ENCODE measurements at regions of chr5 and their contacts with region 1.

Region 1: DNA sequence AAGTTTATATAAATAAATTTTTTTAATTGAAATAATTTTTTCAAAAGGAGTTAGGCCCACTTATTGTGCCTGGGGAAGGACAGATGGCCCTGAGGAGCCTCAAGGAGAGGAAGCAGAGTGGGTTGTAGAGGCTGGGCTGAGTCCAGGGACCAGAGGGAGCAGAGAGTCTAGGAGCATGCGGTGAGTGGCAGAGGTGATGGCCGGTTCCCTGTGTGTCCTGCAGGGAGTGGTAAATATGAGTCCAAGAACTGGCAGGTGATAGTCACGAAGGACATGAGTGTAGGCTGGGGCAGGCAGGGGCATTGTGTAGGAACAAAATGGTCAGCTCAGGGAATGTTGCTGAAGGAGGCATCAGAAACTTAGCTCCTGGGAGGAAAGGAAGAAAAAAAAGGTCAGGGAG is 8.3 kb upstream of the BTNL9 start:
- DNase-seq: no peak

Region 2: GRCh38 chr5:180353048-180353979 is 678.4 kb before region 1 on chr5 and contains the start of gene GFPT2:
- intact Hi-C with region 1: no loop called
- DNase-seq: peak; percentile 94
- total RNA-seq, gene GFPT2: 75.4 to 83.3 TPM

Region 3: GRCh38 chr5:180831139-180832048 is 200.3 kb before region 1 on chr5:
- intact Hi-C with region 1: no loop called
- DNase-seq: peak; percentile 95

Region 4: DNA sequence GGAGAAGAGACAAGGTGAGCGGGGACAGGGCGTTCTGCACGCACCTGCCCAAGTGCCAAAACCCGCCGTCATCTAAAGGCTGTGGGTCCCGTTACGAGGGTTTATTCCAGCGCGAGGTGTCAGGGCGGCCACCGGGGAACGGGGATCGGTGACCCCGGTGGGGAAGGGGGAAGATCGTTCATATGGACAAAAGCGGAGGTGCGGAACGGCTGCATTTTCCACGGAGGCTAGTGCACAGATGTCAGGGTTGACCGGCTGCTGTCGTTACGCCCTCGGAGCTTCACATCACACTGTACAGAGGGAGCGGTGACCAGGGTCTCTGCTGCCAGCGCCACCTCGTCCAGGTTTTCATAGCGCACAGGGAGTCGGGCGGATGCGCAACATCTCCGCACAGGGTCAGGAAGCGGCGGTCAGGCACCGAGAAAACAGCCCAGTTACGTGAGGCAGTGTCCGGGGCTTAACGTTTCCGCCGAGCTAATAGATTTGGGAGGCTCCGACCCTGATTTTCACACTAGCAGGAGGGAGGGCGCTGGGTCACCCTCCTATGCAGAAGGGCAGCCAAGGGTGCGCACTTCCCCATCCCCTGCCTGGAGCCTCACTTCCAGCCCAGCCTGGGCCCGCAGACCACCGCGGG is 21.9 kb after region 1 on chr5:
- intact Hi-C with region 1: loop called in 1 of 2 experiments (anchors 1 kb)
- DNase-seq: no peak